Caki2 (cell line): ENCODE measurements at regions of chr17 and their contacts with region 1.

Region 1: DNA sequence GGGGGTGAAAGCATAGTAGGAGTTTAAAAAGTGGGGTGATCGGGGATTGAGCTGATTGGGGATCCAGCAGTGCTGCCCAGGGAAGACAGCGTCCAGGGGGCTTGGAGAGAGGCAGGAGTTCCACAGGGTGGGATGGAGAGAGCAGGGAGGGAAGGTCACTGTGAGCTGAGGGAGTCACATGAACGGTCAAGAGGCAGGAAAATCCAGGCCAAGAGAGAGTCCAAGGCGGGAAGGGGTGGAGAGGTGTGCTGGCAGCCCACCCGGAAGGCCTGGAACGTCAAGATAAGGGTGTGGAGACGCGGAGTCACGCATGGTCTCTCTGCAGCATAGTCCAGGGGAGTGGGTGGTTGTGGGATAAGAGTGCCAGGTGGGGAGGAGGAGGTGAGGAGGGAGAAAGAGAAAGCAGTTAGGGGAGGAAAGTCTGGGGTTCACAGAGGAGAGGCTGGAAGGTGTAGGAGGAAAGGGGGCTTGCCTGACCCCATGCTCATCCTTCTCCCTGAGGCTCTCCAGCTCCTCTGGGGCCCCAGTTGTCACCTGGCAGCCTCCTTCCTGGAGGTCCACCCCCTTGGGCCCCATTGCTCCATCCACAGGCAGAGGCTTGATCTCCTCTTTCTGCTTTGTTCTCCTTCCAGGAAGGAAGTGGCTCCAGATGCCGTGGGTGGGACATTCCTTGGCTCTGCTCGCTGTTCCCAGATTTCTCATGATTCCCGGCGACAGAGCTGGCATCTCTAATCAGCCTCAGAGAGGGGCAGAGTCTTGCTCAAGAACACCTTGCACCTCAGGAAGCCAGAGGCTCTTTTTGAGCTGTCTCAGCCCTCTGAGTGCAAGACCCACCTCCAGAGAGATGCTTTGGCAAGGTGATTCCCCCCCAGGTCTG is 28.7 kb downstream of the CCR7 start:
- DNase-seq: no peak

Region 2: DNA sequence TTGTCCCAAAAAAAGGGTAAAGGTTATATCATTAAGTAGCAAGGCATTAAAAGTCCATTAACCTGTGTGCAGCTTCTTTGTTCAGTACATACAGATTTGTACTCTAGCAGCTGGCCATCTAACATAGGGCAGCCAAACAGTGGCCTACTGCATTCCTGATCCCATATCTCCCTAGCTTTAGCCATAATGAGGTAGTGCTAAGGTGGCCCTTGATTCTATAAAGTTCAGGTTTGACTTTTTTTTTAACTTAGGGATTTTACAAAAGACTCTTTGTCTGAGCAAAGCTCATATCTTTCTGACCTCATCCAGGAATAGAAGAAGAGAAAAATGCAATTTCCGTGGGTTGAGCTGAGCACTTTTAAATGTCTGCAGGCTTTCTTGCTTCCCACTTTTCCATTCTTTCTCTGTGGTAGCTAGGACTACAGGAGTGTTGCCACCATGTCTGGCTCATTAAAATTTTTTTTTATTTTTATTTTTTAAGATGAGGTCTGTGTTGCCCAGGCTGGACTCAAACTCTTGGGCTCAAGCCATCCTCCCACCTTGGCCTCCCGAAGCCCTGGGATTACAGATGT is 268.3 kb before region 1 on chr17:
- in situ Hi-C with region 1: no loop called
- DNase-seq: no peak

Region 3: GRCh38 chr17:40422990-40423616 is 113.4 kb before region 1 on chr17:
- in situ Hi-C with region 1: loop called (anchors 10 kb)
- DNase-seq: no peak

Region 4: GRCh38 chr17:40485851-40486512 is 50.6 kb before region 1 on chr17:
- in situ Hi-C with region 1: no loop called
- DNase-seq: peak; percentile 89

Region 5: DNA sequence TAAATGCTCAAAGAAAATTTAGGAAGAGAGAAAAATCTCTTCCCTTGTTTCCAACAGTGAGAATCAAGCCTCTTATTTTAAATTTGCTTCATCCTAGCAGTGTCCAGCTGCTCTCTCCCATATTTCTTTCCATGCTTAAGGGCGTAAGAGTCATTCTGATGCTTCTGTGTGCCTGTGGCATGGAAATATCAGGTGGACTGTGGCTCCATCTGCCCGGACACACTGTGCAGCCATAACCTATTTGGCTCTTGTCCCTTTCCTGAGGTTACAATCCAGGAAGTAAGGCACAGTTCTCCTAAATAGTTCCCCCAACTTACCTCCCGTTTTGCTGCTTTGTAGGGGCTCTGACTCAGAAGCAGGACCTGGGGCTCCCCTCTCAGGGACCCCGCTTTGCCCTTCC is 134.7 kb after region 1 on chr17:
- in situ Hi-C with region 1: no loop called
- DNase-seq: no peak

Region 6: GRCh38 chr17:41131979-41132378 is 595.4 kb after region 1 on chr17:
- in situ Hi-C with region 1: no loop called
- DNase-seq: peak; percentile 16